ENCODE measurements at regions of chr22 and their contacts with region 1.

Region 1: GRCh38 chr22:50250555-50251476 is at the start of gene HDAC10:
- DNase-seq: peak; percentile 88
- H3K4me3 ChIP-seq: peak within 1 kb of the TSS; percentile 47 to 82 (median 68)
- H3K27ac ChIP-seq: peak within 1 kb of the TSS; percentile 75 to 82 (median 81)
- H3K4me1 ChIP-seq: peaks cover 0 to 48% (median 32%) of the 10 kb centered on the region in 4 donors
- H3K27me3 ChIP-seq: no peaks in the 10 kb centered on the region
- CTCF ChIP-seq: no peak
- EP300 ChIP-seq: no peak
- POLR2A ChIP-seq: no peak
- total RNA-seq, gene HDAC10: 7.2 to 47.4 (median 14.9) TPM

Region 2: GRCh38 chr22:50306753-50307749 is 56.2 kb after region 1 on chr22 and contains the start of gene PLXNB2:
- intact Hi-C with region 1: loop called (anchors 2 kb)
- DNase-seq: peak; percentile 93
- H3K4me3 ChIP-seq: peak within 1 kb of the TSS; percentile 66 to 83 (median 80)
- H3K27ac ChIP-seq: peak within 1 kb of the TSS; percentile 89 to 96 (median 90)
- H3K4me1 ChIP-seq: peaks cover 3 to 70% (median 58%) of the 10 kb centered on the region in 4 donors
- H3K27me3 ChIP-seq: no peaks in the 10 kb centered on the region
- CTCF ChIP-seq: no peak
- EP300 ChIP-seq: no peak
- POLR2A ChIP-seq: no peak
- total RNA-seq, gene PLXNB2: 60.4 to 150 (median 68.7) TPM

Measured in sigmoid colon (tissue), 7 donors.